HEK293T (cell line): ENCODE measurements at regions of chr17 and their contacts with region 1.

Region 1: DNA sequence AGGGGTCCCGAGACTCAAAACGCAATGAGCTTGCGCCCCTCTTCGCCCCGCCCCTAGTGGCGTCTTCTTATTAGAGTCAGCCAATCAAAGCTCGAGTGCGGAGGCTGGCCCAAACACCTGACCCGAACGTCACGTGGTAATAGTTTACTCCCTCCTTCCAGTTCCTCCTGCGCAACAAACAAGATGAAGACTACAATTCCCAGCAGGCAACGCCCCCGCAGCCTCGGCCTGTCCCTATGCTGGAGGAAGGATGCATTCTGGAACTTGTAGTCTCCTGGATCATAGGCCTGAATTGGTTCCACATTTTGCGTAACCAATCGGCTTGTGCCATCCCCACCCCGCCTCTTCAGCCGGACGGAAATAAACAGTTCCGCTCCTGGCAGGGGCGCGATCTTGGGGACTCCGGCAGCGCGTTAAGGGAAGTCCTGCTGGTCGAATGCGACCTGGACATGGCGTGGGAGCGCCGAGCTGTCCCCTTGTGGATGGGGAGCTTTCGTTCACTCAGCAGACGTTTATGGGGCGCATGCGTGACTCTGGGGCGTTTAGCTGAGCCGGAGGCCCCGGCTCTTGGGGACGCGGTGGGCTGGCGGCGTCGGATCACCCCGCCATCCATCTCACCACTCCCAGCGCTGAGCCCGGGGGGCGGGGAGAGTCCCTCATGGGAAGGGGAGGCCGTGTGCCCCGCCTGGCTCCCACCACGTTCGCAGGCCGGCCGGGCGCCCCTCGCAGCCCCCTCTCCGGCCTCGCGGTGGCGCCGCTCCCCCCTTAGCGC is at the start of gene WBP2:
- DNase-seq: peak; percentile 98

Region 2: DNA sequence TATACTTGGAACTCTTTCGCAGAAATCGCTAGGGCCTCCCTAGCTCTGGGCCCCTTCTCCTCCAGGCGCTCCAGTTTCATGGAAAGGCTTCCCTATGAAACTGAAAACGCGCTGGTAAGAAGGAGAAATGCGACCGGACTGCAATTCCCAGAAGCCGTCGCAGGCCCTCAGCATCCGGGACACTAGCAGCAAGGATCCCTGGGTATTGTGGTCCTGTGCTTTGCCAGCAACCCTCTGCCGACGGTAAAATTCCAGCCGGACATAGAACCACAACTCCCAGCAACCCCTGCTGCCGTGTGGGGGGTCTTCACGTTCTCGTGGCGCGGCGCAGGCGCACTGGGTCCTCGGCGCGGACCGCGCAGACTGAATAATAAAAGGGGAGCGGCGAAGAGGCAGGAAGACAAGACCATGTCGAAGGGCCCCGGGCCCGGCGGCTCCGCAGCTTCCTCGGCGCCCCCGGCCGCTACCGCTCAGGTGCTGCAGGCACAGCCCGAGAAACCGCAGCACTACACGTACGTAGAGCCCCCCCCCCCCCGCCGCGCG is 71.0 kb before region 1 on chr17 and contains the start of gene UNK:
- CTCF ChIA-PET with region 1: interaction called, 4 read pairs
- POLR2A ChIA-PET with region 1: interaction called, 32 read pairs
- DNase-seq: peak; percentile 95

Region 3: DNA sequence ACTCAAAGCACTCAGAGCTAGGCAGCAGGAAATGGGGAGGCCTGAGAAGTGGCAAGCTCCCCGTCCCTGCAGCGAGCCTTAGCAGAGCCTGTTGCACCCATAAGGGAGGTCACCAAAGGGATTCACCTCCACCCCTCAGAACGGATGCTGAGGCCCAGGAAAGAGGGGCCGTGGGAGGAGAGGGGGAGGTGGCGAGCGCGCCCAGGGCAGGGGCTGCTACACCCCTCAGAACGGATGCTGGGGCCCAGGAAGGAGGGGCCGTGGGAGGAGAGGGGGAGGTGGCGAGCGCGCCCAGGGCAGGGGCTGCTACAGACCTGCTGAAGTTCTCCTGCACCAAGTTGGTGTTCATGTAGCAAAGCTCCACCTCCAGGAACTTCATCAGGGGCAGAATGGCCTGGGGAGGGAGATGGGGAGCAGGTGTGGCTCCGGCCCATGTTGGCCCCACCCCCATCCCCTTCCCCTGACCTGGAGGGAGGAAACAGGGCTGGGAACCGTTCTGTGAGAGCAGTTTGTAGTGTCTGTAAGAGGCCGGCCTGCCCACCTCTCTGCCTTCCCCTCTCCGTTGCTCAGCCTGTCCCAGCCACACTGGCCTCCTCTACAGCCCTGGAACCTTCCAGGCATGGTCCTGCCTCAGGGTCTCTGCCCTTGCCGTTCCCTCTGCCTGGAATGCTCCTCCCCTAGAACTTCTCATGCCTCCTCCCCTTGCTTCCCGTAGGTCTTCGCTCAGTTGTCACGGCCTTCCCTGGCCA is 22.7 kb before region 1 on chr17:
- CTCF ChIA-PET with region 1: interaction called, 11 read pairs
- POLR2A ChIA-PET with region 1: interaction called, 12 read pairs
- DNase-seq: no peak

Region 4: GRCh38 chr17:75877752-75878173 is 22.3 kb after region 1 on chr17:
- CTCF ChIA-PET with region 1: interaction called, 33 read pairs
- POLR2A ChIA-PET with region 1: interaction called, 26 read pairs
- DNase-seq: peak; percentile 85